Calu3 (cell line): ENCODE measurements at regions of chr12 and their contacts with region 1.

Region 1: GRCh38 chr12:50074936-50075807 is 10.0 kb upstream of the SMARCD1 start:
- DNase-seq: peak; percentile 85
- H3K4me3 Mint-ChIP-seq: no peak overlapping the region
- H3K27ac Mint-ChIP-seq: no peak overlapping the region
- H3K4me1 Mint-ChIP-seq: peaks cover 11% of the 10 kb centered on the region
- H3K27me3 Mint-ChIP-seq: no peaks in the 10 kb centered on the region
- CTCF ChIP-seq: peak; percentile 63

Region 2: GRCh38 chr12:49750027-49750995 is 324.9 kb before region 1 on chr12:
- CTCF ChIA-PET with region 1: no interaction called
- intact Hi-C with region 1: no loop called
- DNase-seq: no peak
- H3K4me3 Mint-ChIP-seq: peak overlapping the region; percentile 19
- H3K27ac Mint-ChIP-seq: peak overlapping the region; percentile 89
- H3K4me1 Mint-ChIP-seq: peaks cover 12% of the 10 kb centered on the region
- H3K27me3 Mint-ChIP-seq: no peaks in the 10 kb centered on the region
- CTCF ChIP-seq: no peak

Region 3: DNA sequence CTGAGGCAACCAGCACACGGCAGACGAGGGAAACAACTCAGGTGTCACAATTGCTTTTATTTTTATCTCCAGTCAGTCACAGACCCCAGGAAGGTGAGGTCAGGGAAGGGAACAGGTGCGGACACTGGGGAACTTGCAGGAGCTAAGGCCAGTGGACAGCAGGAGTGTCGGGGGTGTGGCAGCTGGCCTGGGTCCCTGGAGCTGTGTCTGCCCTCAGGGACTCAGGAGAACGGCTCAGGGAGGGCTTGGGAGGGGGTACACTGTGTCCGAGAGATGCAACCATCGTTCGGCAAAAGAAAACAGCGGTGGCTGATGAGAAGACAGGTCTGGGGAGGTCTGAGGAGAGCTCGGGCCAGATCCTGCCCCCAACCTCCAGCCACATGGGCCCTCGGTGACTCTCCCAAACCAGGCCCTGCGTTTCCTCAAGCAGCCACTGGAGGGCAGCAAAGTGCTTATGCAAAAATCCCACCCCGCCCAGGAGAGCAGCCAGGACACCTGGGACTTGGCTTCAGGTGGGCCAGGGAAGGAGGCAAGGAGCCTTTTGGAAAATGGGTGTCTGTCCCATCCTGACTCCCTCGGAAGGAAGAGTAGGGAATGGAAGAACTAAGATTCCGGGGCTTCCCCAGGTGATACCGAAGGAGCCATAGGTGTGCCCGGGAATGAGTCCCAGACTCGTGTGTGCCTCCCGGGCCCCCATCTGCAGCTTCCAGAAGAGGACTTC is 208.2 kb before region 1 on chr12:
- CTCF ChIA-PET with region 1: interaction called, 9 read pairs
- intact Hi-C with region 1: loop called (anchors 5 kb)
- DNase-seq: peak; percentile 77
- H3K4me3 Mint-ChIP-seq: no peak overlapping the region
- H3K27ac Mint-ChIP-seq: no peak overlapping the region
- H3K4me1 Mint-ChIP-seq: peaks cover 10% of the 10 kb centered on the region
- H3K27me3 Mint-ChIP-seq: peaks cover 21% of the 10 kb centered on the region
- CTCF ChIP-seq: peak; percentile 73

Region 4: DNA sequence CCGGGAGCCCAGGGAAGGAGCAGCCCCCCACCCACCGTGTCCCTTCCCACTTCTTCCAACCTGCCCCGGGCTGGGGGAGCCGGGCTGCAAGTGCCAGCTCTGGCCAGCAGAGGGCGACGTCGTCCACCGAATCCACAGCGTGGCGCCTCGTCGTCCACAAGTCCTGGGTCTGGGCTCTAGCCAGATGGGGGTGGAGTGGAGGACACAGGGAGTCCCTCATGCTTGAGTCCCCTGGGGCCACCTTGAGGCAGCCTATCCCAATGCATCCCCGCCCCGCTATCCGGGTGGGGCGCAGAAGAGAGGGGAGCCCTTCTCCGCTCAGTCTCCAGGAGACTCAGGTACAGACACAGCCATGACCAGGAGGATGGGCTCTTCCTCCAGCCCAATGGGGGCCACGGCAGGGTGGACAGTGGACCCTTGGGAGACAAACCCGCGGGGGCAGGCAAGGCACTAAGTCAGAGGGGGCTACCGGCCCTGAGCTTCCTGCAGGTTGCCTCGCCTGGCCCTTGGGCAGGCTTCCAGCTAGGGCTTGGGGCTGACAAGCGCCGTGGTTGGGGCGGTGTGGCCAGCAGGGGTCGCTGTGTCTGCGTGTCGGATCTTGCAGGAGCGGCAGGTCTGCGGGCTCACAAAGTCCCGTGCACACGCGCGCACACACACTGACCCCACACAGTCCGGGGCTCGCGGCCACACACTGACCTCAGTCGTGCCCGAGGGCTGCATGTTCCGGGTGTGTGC is 108.0 kb before region 1 on chr12:
- CTCF ChIA-PET with region 1: interaction called, 25 read pairs
- intact Hi-C with region 1: loop called (anchors 2 kb)
- DNase-seq: peak; percentile 86
- H3K4me3 Mint-ChIP-seq: peak overlapping the region; percentile 41
- H3K27ac Mint-ChIP-seq: peak overlapping the region; percentile 68
- H3K4me1 Mint-ChIP-seq: peaks cover 27% of the 10 kb centered on the region
- H3K27me3 Mint-ChIP-seq: no peaks in the 10 kb centered on the region
- CTCF ChIP-seq: peak; percentile 77

Region 5: DNA sequence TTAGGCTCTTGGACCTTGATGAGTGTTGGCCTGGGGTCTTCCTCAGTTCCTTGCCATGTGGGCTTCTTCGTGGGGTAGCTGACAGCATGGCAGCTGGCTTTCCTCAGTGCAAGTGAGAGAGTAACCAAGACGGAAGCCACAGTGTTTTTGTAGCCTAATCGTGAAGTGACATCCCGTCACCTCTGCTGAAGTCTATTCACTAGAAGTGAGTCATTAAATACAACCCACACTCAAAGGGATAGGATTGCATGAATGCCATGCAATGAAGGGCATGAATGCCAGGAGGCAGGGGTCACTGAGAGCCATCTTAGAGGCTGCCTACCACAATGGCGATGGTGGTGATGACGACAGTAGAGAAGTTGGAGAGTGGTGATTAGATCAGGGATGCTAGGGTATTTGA is 31.3 kb before region 1 on chr12:
- CTCF ChIA-PET with region 1: interaction called, 10 read pairs
- intact Hi-C with region 1: no loop called
- DNase-seq: no peak
- H3K4me3 Mint-ChIP-seq: no peak overlapping the region
- H3K27ac Mint-ChIP-seq: no peak overlapping the region
- H3K4me1 Mint-ChIP-seq: no peaks in the 10 kb centered on the region
- H3K27me3 Mint-ChIP-seq: peaks cover 40% of the 10 kb centered on the region
- CTCF ChIP-seq: no peak

Region 6: GRCh38 chr12:50174971-50175715 is 100.0 kb after region 1 on chr12:
- CTCF ChIA-PET with region 1: interaction called, 4 read pairs
- intact Hi-C with region 1: loop called (anchors 5 kb)
- DNase-seq: peak; percentile 13
- H3K4me3 Mint-ChIP-seq: no peak overlapping the region
- H3K27ac Mint-ChIP-seq: no peak overlapping the region
- H3K4me1 Mint-ChIP-seq: no peaks in the 10 kb centered on the region
- H3K27me3 Mint-ChIP-seq: no peaks in the 10 kb centered on the region
- CTCF ChIP-seq: peak; percentile 20

Region 7: DNA sequence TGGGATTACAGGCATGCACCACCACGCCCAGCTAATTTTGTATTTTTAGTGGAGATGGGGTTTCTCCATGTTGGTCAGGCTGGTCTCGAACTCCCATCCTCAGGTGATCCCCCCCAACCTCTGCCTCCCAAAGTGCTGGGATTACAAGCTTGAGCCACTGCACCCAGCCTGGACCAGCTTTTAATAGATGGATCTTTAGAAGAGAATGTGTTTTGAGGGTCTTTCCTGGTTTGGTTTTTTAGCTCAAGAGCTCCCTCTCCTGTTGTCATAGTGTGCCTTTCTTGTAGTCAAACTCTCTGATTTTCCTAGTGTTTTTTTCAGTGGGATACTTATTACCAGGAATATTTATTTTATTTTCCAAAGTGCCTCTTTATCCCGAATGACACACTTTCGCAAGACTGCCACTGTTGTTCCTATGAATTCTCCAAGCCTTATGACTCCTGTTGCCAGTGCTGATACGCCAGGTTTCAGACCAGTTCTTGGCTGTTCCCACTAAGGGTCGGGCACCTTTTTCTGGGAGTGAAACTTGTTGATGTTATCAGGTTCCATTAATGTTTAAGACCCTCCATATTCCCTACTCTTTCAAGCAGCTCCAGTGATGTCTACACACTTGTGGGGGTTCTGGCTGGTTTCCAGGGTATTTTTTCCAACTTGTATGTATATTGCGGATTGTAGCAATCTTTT is 239.6 kb after region 1 on chr12:
- CTCF ChIA-PET with region 1: interaction called, 3 read pairs
- intact Hi-C with region 1: loop called (anchors 10 kb)
- DNase-seq: peak; percentile 7
- H3K4me3 Mint-ChIP-seq: no peak overlapping the region
- H3K27ac Mint-ChIP-seq: no peak overlapping the region
- H3K4me1 Mint-ChIP-seq: peaks cover 20% of the 10 kb centered on the region
- H3K27me3 Mint-ChIP-seq: no peaks in the 10 kb centered on the region
- CTCF ChIP-seq: peak; percentile 38